B cell (primary cell): ENCODE measurements at regions of chr5 and their contacts with region 1.

Region 1: GRCh38 chr5:130871346-130872086 is 293.5 kb downstream of the HINT1 start:
- DNase-seq: peak; percentile 50
- ATAC-seq: peak; percentile 45
- H3K4me3 ChIP-seq: no peak overlapping the region
- H3K4me3 Mint-ChIP-seq: no peak overlapping the region
- H3K27ac ChIP-seq: no peak overlapping the region
- H3K27ac Mint-ChIP-seq: no peak overlapping the region
- H3K4me1 ChIP-seq: no peaks in the 10 kb centered on the region
- H3K4me1 Mint-ChIP-seq: no peaks in the 10 kb centered on the region
- H3K27me3 ChIP-seq: no peaks in the 10 kb centered on the region
- H3K27me3 Mint-ChIP-seq: no peaks in the 10 kb centered on the region
- CTCF ChIP-seq: peak; percentile 69

Region 2: DNA sequence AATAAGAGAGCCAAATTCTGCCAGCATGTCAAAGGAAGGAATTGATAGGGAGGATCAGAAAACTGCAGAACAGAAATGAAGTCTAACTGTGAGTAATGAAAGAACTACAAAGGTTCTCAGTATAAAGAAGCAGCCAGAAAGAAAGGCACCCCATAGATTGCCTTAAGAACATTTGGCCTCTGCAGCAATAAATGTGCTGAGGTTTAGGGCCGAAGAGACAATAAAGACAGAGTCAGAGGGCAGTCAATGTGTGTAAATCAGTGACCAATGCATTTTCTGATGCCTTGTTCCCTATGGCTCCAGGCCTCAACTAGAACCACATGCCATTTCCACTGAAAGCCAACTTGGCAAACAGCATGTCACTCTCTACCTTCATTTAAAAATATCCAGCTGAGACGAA is 12.5 kb after region 1 on chr5:
- CTCF ChIA-PET with region 1: interaction called, 10 read pairs
- POLR2A ChIA-PET with region 1: no interaction called
- intact Hi-C with region 1: no loop called
- DNase-seq: no peak
- ATAC-seq: no peak
- H3K4me3 ChIP-seq: no peak overlapping the region
- H3K4me3 Mint-ChIP-seq: no peak overlapping the region
- H3K27ac ChIP-seq: no peak overlapping the region
- H3K27ac Mint-ChIP-seq: no peak overlapping the region
- H3K4me1 ChIP-seq: no peaks in the 10 kb centered on the region
- H3K4me1 Mint-ChIP-seq: no peaks in the 10 kb centered on the region
- H3K27me3 ChIP-seq: peaks cover 0 to 6% (median 1%) of the 10 kb centered on the region in 4 experiments
- H3K27me3 Mint-ChIP-seq: peaks cover 25% of the 10 kb centered on the region
- CTCF ChIP-seq: no peak

Region 3: GRCh38 chr5:131109540-131110255 is 238.2 kb after region 1 on chr5:
- CTCF ChIA-PET with region 1: interaction called, 15 read pairs
- POLR2A ChIA-PET with region 1: no interaction called
- intact Hi-C with region 1: no loop called
- DNase-seq: peak; percentile 53
- ATAC-seq: peak; percentile 39
- H3K4me3 ChIP-seq: no peak overlapping the region
- H3K4me3 Mint-ChIP-seq: no peak overlapping the region
- H3K27ac ChIP-seq: no peak overlapping the region
- H3K27ac Mint-ChIP-seq: no peak overlapping the region
- H3K4me1 ChIP-seq: no peaks in the 10 kb centered on the region
- H3K4me1 Mint-ChIP-seq: no peaks in the 10 kb centered on the region
- H3K27me3 ChIP-seq: no peaks in the 10 kb centered on the region
- H3K27me3 Mint-ChIP-seq: no peaks in the 10 kb centered on the region
- CTCF ChIP-seq: peak; percentile 87

Region 4: GRCh38 chr5:131417240-131417869 is 545.8 kb after region 1 on chr5:
- CTCF ChIA-PET with region 1: interaction called, 26 read pairs
- POLR2A ChIA-PET with region 1: no interaction called
- intact Hi-C with region 1: no loop called
- DNase-seq: peak; percentile 82
- ATAC-seq: peak; percentile 63
- H3K4me3 ChIP-seq: peak overlapping the region in 1 of 5 experiments; percentile 43
- H3K4me3 Mint-ChIP-seq: peak overlapping the region; percentile 54
- H3K27ac ChIP-seq: no peak overlapping the region
- H3K27ac Mint-ChIP-seq: no peak overlapping the region
- H3K4me1 ChIP-seq: peaks cover 18 to 19% of the 10 kb centered on the region in 2 donors
- H3K4me1 Mint-ChIP-seq: peaks cover 32% of the 10 kb centered on the region
- H3K27me3 ChIP-seq: no peaks in the 10 kb centered on the region
- H3K27me3 Mint-ChIP-seq: no peaks in the 10 kb centered on the region
- CTCF ChIP-seq: peak; percentile 97